Heart right ventricle (tissue), 16 donors: ENCODE measurements at regions of chr1 and their contacts with region 1.

Region 1: GRCh38 chr1:234997201-234997895 is 131.3 kb downstream of the TOMM20 start:
- DNase-seq: peak; percentile 97
- ATAC-seq: peak; percentile 91 to 98 (median 96)
- H3K4me3 ChIP-seq: peak overlapping the region in 5 of 10 donors; percentile 6 to 13 (median 12)
- H3K27ac ChIP-seq: peak overlapping the region; percentile 87 to 95 (median 92)
- H3K4me1 ChIP-seq: peaks cover 21 to 35% (median 30%) of the 10 kb centered on the region in 9 donors
- H3K27me3 ChIP-seq: no peaks in the 10 kb centered on the region
- CTCF ChIP-seq: no peak

Region 2: DNA sequence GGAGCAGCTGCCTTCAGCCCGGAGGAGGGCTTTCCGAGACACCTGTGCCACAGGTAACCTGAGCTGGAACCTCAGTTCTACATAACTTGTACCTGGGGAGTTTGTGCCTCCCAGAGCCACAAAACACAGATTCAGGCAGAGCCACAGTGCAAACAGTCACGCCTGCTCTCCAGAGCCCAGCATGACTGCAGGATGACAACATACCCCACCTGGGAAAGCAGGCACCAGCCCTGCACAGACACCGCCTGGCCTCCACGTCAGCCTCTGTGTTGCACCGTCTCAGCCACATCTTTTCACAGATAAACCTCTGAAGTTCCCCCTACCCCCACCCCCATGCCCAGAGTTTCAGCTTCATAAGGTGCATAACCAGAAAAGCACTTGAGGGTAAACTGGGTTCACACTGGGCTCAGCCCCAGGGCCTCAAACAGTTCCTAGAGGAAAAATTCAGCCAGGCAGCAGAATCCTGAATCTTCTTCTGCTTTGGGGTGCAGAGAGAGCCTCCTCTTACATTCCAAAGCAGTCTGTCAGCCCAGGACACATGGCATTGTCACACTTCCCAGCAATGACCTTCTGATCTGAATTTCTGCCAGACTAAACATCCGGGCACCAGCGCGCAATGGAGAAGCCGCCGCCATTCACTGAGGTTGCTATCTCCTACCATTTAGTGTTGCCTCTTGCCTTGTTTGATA is 98.2 kb before region 1 on chr1:
- intact Hi-C with region 1: loop called in 2 of 10 experiments (anchors 5 kb)
- DNase-seq: peak in 1 of 2 donors; percentile 71
- ATAC-seq: peak; percentile 68 to 83 (median 76)
- H3K4me3 ChIP-seq: no peak overlapping the region
- H3K27ac ChIP-seq: peak overlapping the region; percentile 64 to 87 (median 82)
- H3K4me1 ChIP-seq: peaks cover 15 to 52% (median 29%) of the 10 kb centered on the region in 9 donors
- H3K27me3 ChIP-seq: no peaks in the 10 kb centered on the region
- CTCF ChIP-seq: no peak